Aorta (tissue), 5 donors: ENCODE measurements at regions of chr14 and their contacts with region 1.

Region 1: GRCh38 chr14:92748259-92749016 is at the start of gene LGMN:
- DNase-seq: peak; percentile 98
- ATAC-seq: peak; percentile 97
- H3K4me3 ChIP-seq: peak within 1 kb of the TSS; percentile 63 to 81
- H3K27ac ChIP-seq: peak within 1 kb of the TSS in 1 of 2 donors; percentile 68
- H3K4me1 ChIP-seq: no peaks in the 10 kb centered on the region
- H3K27me3 ChIP-seq: no peaks in the 10 kb centered on the region
- total RNA-seq, gene LGMN: 90.0 to 164 TPM

Region 2: DNA sequence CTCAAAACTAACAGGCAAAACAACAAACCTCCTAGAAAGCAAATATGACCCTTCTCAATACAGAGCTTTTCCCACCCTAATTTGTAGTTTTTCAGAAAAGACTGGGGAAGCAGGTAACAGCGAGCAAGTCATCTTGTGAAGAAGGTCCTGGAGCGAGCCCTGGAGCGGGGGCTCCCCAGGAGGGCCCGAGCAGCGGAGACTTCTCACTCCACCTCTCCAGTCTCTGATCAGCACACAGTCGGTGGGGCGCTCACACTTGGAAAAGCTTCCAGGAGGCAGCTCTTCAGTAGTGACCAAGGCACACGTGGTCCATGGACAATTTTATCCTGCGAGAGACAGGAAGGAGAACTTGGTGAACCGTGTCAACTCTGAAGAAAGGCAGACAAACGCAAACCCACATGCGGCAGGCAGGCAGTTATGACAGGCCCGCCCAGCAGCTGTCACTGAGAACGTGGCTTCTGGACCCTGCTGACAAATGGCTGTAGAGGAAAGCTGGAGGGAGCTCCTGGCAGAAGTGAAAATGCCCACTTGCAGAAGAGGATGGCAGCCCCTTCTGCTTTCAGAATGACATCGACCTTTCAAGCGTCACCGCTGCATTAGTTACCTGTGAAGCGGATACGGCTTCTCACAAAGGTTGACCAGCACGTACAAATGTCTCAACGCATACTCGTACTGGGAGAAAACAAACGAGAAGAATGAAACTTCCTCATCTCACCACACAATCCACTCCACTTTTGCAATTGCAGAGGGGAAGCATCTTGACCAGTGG is 44.2 kb before region 1 on chr14:
- intact Hi-C with region 1: no loop called
- DNase-seq: peak in 1 of 2 donors; percentile 58
- ATAC-seq: no peak
- H3K4me3 ChIP-seq: no peak overlapping the region
- H3K27ac ChIP-seq: no peak overlapping the region
- H3K4me1 ChIP-seq: no peaks in the 10 kb centered on the region
- H3K27me3 ChIP-seq: no peaks in the 10 kb centered on the region

Region 3: GRCh38 chr14:92793709-92794546 is 45.5 kb after region 1 on chr14 and contains the start of gene GOLGA5:
- intact Hi-C with region 1: loop called (anchors 2 to 5 kb)
- DNase-seq: peak; percentile 98 to 99
- ATAC-seq: peak; percentile 100
- H3K4me3 ChIP-seq: peak within 1 kb of the TSS; percentile 76 to 80
- H3K27ac ChIP-seq: peak within 1 kb of the TSS in 1 of 2 donors; percentile 83
- H3K4me1 ChIP-seq: no peaks in the 10 kb centered on the region
- H3K27me3 ChIP-seq: no peaks in the 10 kb centered on the region
- total RNA-seq, gene GOLGA5: 32.7 to 33.6 TPM

Region 4: DNA sequence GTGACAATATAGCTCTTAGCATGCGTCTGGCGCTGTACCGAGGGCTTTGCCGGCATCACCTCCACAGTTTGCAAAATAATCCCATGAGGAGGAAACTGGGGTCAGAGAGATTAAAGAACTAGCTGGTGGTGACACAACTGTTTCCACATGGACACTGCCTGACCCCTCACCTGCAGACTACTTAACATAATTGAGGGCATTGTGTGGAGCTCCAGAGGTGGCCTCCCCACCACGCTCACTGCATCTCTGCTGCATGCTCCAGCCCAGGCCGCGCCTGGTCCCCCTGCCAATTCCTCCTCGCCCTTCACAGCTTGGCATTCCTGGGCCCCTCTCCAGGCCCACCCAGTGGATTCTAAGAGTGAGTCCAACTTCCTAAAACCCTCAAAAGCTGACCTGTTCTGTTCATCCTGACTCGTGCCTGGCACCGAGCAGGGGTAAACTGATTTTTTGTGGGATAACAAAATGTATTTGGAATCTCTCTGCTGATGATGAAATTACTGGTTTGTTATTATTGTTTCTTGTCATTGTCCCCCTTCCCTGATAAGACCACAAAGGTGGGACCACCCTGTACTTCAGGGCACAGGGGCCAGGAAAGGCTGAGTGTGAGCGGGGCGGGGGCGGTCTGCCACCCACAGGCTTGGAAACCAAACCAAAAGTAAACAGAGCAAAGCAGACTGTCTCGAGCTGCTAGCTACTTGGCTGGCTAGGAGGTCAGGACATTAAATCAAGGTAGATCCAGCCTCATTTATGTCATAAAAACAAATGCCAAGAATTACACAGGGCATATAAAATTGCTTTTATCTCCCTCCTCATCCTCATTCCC is 215.1 kb after region 1 on chr14:
- intact Hi-C with region 1: no loop called
- DNase-seq: peak; percentile 14 to 35
- ATAC-seq: no peak
- H3K4me3 ChIP-seq: no peak overlapping the region
- H3K27ac ChIP-seq: no peak overlapping the region
- H3K4me1 ChIP-seq: no peaks in the 10 kb centered on the region
- H3K27me3 ChIP-seq: no peaks in the 10 kb centered on the region